SK-N-SH (cell line): ENCODE measurements at regions of chr11 and their contacts with region 1.

Region 1: GRCh38 chr11:13970986-13971385 is 8.5 kb downstream of the SPON1 start:
- DNase-seq: peak; percentile 64
- H3K4me3 ChIP-seq: no peak overlapping the region
- H3K27ac ChIP-seq: no peak overlapping the region
- H3K4me1 ChIP-seq: peaks cover 0 to 3% of the 10 kb centered on the region in 2 experiments; a peak in 1 of 4 replicates
- H3K27me3 ChIP-seq: peaks cover 7% of the 10 kb centered on the region; the same call in 1 of the 2 replicates
- CTCF ChIP-seq: no peak; the same call in 1 of the 2 replicates
- EP300 ChIP-seq: no peak
- RAD21 ChIP-seq: peak; percentile 69

Region 2: DNA sequence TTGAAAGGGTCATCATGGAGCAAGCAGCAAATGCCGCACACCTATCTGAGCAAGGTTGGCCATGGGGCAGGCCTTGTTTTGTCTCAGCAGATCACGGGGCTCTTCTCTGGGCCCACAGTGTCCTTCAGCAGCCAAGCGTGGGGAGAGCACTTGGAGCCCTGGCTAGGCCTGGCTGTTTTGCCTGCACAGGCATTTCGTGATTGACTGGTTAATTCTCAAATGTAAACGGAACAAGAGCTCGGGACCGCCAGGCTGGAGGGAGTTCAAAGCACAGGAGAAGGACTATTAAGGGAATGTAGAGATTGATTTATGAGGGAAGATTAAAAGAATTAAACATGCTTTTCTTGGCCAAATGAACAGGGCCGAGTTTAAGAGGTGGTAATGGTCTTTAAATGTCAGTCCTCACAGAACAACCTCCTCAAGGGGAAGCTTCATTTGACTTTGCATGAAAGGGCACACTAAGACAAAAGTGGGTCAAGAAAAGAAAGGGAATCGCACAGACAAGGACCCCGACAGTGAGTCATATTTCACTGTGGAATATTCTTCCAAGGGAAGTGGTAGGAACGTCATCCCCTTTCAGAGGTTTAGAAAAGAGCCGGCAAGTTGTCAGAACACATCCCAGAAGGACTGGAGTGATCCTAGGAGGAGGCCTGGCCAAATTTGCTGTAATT is 12.2 kb after region 1 on chr11:
- CTCF ChIA-PET with region 1: interaction called, 12 read pairs
- POLR2A ChIA-PET with region 1: no interaction called
- DNase-seq: no peak
- H3K4me3 ChIP-seq: no peak overlapping the region
- H3K27ac ChIP-seq: no peak overlapping the region
- H3K4me1 ChIP-seq: no peaks in the 10 kb centered on the region
- H3K27me3 ChIP-seq: no peaks in the 10 kb centered on the region
- CTCF ChIP-seq: no peak
- EP300 ChIP-seq: no peak
- RAD21 ChIP-seq: no peak

Region 3: GRCh38 chr11:14148653-14149273 is 177.8 kb after region 1 on chr11:
- CTCF ChIA-PET with region 1: interaction called, 34 read pairs
- POLR2A ChIA-PET with region 1: no interaction called
- DNase-seq: no peak
- H3K4me3 ChIP-seq: no peak overlapping the region
- H3K27ac ChIP-seq: no peak overlapping the region
- H3K4me1 ChIP-seq: peaks cover 0 to 10% of the 10 kb centered on the region in 2 experiments; a peak in 2 of 4 replicates
- H3K27me3 ChIP-seq: no peaks in the 10 kb centered on the region
- CTCF ChIP-seq: peak; percentile 62
- EP300 ChIP-seq: no peak
- RAD21 ChIP-seq: peak; percentile 70

Region 4: DNA sequence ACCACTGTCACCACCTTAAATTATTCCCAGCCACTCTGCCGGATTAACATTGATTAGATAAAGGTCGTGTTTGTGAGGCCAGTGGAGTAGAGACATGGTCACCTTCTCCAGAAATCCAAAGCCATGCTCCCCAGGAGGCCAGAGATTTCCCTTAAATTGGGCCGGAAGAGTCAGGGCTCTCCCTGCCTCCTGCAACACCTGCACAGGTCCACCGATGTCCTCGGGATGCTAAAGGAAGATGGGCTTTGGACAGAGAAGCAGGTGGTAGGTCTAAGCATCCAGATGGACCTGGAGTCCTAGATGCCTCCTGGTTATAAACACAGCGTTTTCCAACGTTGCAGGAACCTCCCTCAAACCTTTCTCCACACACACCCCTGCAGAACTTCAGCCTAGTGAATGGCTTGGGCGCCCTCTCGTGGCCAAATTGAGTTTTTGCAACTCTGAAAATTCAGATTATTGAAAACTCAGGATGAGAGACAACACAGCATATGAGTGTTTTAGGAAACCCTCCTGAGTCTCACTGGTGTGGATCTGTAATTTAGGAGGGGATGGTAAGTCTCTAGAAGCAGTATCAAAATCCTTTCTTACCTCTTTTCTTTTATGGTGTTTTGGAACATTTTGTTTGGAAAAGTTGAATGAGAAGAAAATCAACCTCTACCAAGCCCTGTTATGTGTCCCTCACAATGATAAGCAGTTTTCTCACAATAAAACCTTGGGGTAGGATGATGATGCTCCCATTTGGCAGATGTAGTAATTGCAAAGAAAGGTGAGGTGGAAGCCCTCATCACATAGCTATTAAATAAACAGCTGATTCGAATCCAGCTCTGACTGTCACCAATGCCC is 278.4 kb after region 1 on chr11:
- CTCF ChIA-PET with region 1: interaction called, 13 read pairs
- POLR2A ChIA-PET with region 1: no interaction called
- DNase-seq: peak; percentile 66
- H3K4me3 ChIP-seq: no peak overlapping the region
- H3K27ac ChIP-seq: no peak overlapping the region
- H3K4me1 ChIP-seq: peaks cover 0 to 17% of the 10 kb centered on the region in 2 experiments; a peak in 1 of 4 replicates
- H3K27me3 ChIP-seq: peaks cover 20% of the 10 kb centered on the region; the same call in 1 of the 2 replicates
- CTCF ChIP-seq: peak; percentile 93
- EP300 ChIP-seq: no peak
- RAD21 ChIP-seq: peak; percentile 97